ENCODE measurements at regions of chr9 and their contacts with region 1.

Region 1: DNA sequence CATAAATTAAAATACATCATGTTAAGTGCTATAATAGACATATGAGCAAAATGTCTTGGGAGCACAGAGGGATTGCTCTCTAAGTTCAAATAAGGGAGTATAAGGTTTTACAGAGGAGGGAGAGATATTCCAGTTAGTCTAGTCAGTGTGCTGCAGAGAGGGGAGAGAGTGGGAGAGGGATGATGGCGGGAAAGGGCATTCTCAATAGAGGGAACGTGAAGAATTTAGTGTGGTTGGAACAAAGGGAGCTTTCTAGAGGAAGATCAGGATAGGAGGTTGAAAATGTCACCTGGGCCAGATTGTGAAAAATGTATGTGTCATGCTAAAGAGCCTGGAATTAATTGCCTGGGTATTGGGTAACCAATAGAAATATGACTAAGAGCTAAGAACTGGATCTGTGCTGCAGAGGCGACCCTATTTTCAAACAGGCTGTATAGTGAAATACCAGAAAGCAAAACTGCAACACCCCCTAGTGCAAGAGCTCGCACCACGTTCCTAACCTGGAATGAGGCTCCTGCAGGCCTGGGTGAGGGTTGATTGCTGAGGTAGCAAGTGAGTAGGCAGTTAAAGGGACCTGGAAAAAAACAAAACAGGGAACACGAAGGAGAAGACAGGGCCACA is 791.8 kb upstream of the C9orf72 start:
- DNase-seq: no peak
- ATAC-seq: no peak
- H3K4me3 ChIP-seq: no peak overlapping the region
- H3K27ac ChIP-seq: no peak overlapping the region
- H3K4me1 ChIP-seq: no peaks in the 10 kb centered on the region
- H3K27me3 ChIP-seq: no peaks in the 10 kb centered on the region

Region 2: GRCh38 chr9:28301281-28301680 is 63.8 kb before region 1 on chr9:
- intact Hi-C with region 1: loop called in 1 of 2 experiments (anchors 10 kb)
- DNase-seq: no peak
- ATAC-seq: no peak
- H3K4me3 ChIP-seq: no peak overlapping the region
- H3K27ac ChIP-seq: no peak overlapping the region
- H3K4me1 ChIP-seq: no peaks in the 10 kb centered on the region
- H3K27me3 ChIP-seq: no peaks in the 10 kb centered on the region

Region 3: GRCh38 chr9:29669613-29670012 is 1304.5 kb after region 1 on chr9:
- intact Hi-C with region 1: no loop called
- DNase-seq: no peak
- ATAC-seq: no peak
- H3K4me3 ChIP-seq: no peak overlapping the region
- H3K27ac ChIP-seq: no peak overlapping the region
- H3K4me1 ChIP-seq: no peaks in the 10 kb centered on the region
- H3K27me3 ChIP-seq: no peaks in the 10 kb centered on the region